T-cell (primary cell): ENCODE measurements at regions of chr5 and their contacts with region 1.

Region 1: DNA sequence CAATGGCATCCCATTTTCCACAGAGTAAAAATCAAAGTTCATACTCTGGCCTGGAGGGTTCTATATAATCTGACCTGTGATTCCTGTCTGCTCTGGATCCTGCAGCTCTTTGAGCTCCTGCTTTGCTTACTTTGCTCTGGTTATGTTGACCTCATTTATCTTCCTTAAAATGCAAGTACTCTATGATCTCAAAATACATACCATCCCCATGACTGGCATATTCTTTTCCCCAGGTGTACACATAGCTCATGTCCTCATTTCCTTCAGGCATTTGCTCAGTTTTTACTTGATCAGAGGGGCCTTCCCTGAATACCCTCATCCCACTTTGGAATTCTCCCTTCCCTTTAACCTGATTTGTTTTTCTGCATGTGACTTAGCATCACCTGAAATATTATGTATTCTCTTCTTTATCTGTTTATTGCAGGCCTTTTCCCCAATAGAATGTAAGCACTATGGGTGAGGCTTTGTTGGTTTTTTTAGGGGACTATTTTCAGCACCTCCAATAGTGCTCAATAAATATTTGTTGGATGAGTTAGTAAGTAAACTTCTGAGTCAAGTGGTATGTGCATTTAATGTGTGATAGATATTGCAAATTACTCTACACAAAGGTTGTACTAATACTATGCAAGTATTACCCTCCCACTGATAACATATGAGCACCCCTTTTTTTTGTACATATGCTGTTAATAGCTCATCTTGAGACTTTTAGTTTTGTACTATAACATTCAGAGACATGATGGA is 211.5 kb downstream of the NMUR2 start:
- DNase-seq: no peak
- ATAC-seq: no peak
- H3K4me3 ChIP-seq: no peak overlapping the region
- H3K4me3 Mint-ChIP-seq: no peak overlapping the region
- H3K27ac ChIP-seq: no peak overlapping the region
- H3K27ac Mint-ChIP-seq: no peak overlapping the region
- H3K4me1 ChIP-seq: no peaks in the 10 kb centered on the region
- H3K4me1 Mint-ChIP-seq: no peaks in the 10 kb centered on the region
- H3K27me3 ChIP-seq: no peaks in the 10 kb centered on the region
- H3K27me3 Mint-ChIP-seq: peaks cover 10 to 13% of the 10 kb centered on the region in 2 donors

Region 2: DNA sequence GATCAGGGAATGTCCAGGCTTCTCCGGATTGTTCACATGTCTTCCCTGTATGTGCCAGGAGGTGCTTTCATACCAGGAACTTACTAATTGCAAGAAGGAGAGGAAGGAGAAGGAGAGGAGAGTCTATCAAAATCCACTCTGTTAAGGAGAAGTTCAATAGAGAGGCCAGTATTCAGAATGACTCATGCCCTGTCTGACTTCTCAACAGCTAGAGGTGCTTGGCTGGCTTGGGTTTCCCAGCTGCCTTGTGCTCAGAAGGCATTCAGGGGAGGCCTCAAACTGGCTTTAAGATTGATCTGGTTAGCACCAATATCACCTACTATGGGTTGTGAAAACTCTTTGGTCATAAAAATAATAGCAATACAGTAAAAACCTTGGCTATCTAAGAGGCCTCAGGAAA is 101.0 kb before region 1 on chr5:
- CTCF ChIA-PET with region 1: no interaction called
- POLR2A ChIA-PET with region 1: interaction called in 1 of 2 experiments, 10 read pairs
- DNase-seq: no peak
- ATAC-seq: no peak
- H3K4me3 ChIP-seq: no peak overlapping the region
- H3K4me3 Mint-ChIP-seq: no peak overlapping the region
- H3K27ac ChIP-seq: no peak overlapping the region
- H3K27ac Mint-ChIP-seq: no peak overlapping the region
- H3K4me1 ChIP-seq: no peaks in the 10 kb centered on the region
- H3K4me1 Mint-ChIP-seq: peaks cover 8 to 17% (median 12%) of the 10 kb centered on the region in 3 donors
- H3K27me3 ChIP-seq: no peaks in the 10 kb centered on the region
- H3K27me3 Mint-ChIP-seq: no peaks in the 10 kb centered on the region